ENCODE measurements at regions of chr1 and their contacts with region 1.

Region 1: GRCh38 chr1:241847796-241848685 is at the start of gene EXO1:
- DNase-seq: peak; percentile 87 to 92 (median 89)
- ATAC-seq: peak; percentile 97 to 99 (median 99)
- H3K4me3 ChIP-seq: peak within 1 kb of the TSS; percentile 25 to 97 (median 84)
- H3K27ac ChIP-seq: peak within 1 kb of the TSS; percentile 89 to 100 (median 96)
- H3K4me1 ChIP-seq: peaks cover 0 to 14% (median 10%) of the 10 kb centered on the region in 12 donors
- H3K27me3 ChIP-seq: no peaks in the 10 kb centered on the region
- CTCF ChIP-seq: peak in 9 of 12 donors; percentile 14 to 56 (median 41)
- POLR2A ChIP-seq: peak in 1 of 2 donors; percentile 41
- total RNA-seq, gene EXO1: 0.15 to 4.1 (median 0.81) TPM in 5 of 9 donors, not detected in the others

Region 2: DNA sequence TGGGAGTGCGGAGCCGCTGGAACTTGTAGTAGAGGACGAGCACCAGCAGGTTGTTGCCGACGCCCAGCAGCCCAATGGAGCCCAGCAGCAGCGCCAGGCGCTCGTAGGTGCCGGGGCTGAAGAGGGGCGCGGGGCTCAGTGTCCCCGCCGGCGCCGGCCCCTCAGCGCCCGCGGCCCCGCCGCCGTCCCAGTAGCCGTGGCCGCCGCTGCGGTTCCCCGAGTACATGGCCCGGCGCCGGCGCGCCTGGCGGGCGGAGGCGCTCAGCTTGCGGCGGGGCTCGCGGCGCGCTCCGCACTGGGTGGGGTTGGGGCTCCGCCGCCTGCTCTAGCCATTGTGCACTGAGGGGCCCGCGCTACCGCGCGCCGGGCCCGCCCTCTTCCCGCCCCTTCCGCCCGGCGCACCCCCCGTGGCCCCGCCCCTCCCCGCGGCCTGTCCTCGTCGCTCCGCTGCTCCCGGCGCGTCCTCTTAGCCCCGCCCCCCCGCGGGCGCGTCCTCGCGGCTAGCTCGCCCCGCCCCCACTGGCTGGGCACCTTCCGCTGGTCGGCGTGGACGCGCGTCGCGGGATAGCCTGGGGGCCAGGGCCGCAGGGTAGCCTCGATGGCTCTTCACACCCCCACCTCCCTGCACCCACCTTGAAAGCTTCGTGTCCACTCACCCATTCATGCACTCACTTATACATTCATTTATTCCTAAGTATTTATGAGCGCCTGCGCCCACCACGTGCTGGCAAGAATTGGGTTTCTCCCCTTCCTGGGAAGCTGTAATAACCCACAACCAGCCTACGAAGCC is 207.8 kb before region 1 on chr1 and contains the starts of genes CHML and OPN3:
- intact Hi-C with region 1: loop called in 2 of 10 experiments (anchors 5 kb)
- DNase-seq: peak; percentile 95 to 98 (median 96)
- ATAC-seq: peak; percentile 99 to 100 (median 100)
- H3K4me3 ChIP-seq: peak within 1 kb of the TSS; percentile 73 to 98 (median 90)
- H3K27ac ChIP-seq: peak within 1 kb of the TSS; percentile 17 to 86 (median 78)
- H3K4me1 ChIP-seq: peaks cover 0 to 35% (median 10%) of the 10 kb centered on the region in 12 donors
- H3K27me3 ChIP-seq: no peaks in the 10 kb centered on the region
- CTCF ChIP-seq: no peak
- POLR2A ChIP-seq: peak; percentile 15 to 72
- total RNA-seq, gene CHML: 3.9 to 9.8 (median 6.6) TPM
- total RNA-seq, gene OPN3: 3.5 to 13.6 (median 6.2) TPM

Region 3: DNA sequence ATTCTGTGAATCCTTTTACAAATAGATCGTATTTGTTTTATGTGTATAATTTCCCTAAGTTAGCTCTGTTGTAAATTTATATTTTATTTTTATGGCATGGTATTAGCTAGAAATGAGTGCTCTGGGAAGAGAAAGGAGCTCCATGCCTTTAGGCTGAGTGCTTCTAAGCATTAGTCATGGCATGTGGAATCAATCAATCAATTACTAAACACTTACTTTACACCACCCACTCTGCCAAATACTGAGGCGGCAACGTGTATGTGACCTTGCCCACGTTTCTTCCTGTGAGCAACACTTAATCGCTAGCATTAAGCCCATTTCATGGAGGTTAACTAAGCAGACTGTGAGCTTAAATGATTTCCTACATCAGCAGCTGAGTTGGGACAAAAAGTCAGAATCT is 102.3 kb after region 1 on chr1:
- intact Hi-C with region 1: no loop called
- DNase-seq: no peak
- ATAC-seq: no peak
- H3K4me3 ChIP-seq: no peak overlapping the region
- H3K27ac ChIP-seq: no peak overlapping the region
- H3K4me1 ChIP-seq: no peaks in the 10 kb centered on the region
- H3K27me3 ChIP-seq: no peaks in the 10 kb centered on the region
- CTCF ChIP-seq: no peak
- POLR2A ChIP-seq: no peak

Region 4: GRCh38 chr1:241964550-241965282 is 116.7 kb after region 1 on chr1:
- intact Hi-C with region 1: no loop called
- DNase-seq: peak in 1 of 5 donors; percentile 38
- ATAC-seq: peak in 3 of 4 donors; percentile 38 to 84 (median 42)
- H3K4me3 ChIP-seq: no peak overlapping the region
- H3K27ac ChIP-seq: peak overlapping the region in 1 of 12 donors; percentile 49
- H3K4me1 ChIP-seq: no peaks in the 10 kb centered on the region
- H3K27me3 ChIP-seq: no peaks in the 10 kb centered on the region
- CTCF ChIP-seq: no peak
- POLR2A ChIP-seq: no peak

Measured in heart left ventricle (tissue), 16 donors.